ENCODE measurements at regions of chr5 and their contacts with region 1.

Region 1: GRCh38 chr5:157540707-157541446 is 34.7 kb downstream of the ADAM19 start:
- DNase-seq: peak; percentile 77
- ATAC-seq: peak; percentile 93
- H3K4me3 ChIP-seq: peak overlapping the region in 3 of 5 experiments; percentile 2 to 45 (median 42)
- H3K4me3 Mint-ChIP-seq: peak overlapping the region; percentile 70
- H3K27ac ChIP-seq: peak overlapping the region; percentile 69 to 80
- H3K27ac Mint-ChIP-seq: peak overlapping the region; percentile 84
- H3K4me1 ChIP-seq: peaks cover 69 to 72% of the 10 kb centered on the region in 2 donors
- H3K4me1 Mint-ChIP-seq: peaks cover 82% of the 10 kb centered on the region
- H3K27me3 ChIP-seq: no peaks in the 10 kb centered on the region
- H3K27me3 Mint-ChIP-seq: no peaks in the 10 kb centered on the region
- CTCF ChIP-seq: no peak

Region 2: DNA sequence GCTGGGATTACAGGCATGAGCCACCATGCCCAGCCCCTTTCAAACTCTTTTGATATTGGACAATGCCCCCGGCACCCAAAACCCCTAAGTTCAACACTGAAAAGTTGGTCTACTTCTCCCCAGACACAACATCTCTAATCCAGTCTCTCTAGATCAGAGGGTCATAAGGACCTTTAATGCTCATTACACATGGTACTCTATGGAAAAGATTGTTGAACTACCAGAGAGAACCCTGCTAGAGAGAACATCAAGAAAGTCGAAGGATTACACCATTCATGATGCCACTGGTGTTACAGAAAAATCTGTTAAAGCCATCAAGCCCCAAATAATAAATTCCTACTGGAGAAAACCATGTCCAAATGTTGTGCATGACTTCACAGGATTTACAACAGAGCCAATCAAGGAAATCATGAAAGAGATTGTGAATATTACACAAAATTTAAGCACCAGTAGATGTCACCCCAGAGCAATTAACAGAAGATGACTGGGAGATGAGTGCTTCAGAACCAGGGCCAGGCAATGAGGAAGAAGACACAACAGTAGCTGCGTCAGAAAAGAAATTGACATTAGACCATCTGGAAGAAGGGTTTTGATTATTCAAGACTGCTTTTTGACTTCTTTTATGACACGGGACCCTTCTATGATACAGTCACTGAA is 109.2 kb before region 1 on chr5:
- CTCF ChIA-PET with region 1: interaction called, 15 read pairs
- POLR2A ChIA-PET with region 1: no interaction called
- intact Hi-C with region 1: loop called (anchors 5 kb)
- DNase-seq: peak; percentile 84
- ATAC-seq: peak; percentile 100
- H3K4me3 ChIP-seq: peak overlapping the region in 1 of 5 experiments; percentile 30
- H3K4me3 Mint-ChIP-seq: peak overlapping the region; percentile 40
- H3K27ac ChIP-seq: peak overlapping the region; percentile 28 to 67
- H3K27ac Mint-ChIP-seq: peak overlapping the region; percentile 88
- H3K4me1 ChIP-seq: peaks cover 8 to 11% of the 10 kb centered on the region in 2 donors
- H3K4me1 Mint-ChIP-seq: peaks cover 18% of the 10 kb centered on the region
- H3K27me3 ChIP-seq: no peaks in the 10 kb centered on the region
- H3K27me3 Mint-ChIP-seq: no peaks in the 10 kb centered on the region
- CTCF ChIP-seq: peak; percentile 76

Region 3: DNA sequence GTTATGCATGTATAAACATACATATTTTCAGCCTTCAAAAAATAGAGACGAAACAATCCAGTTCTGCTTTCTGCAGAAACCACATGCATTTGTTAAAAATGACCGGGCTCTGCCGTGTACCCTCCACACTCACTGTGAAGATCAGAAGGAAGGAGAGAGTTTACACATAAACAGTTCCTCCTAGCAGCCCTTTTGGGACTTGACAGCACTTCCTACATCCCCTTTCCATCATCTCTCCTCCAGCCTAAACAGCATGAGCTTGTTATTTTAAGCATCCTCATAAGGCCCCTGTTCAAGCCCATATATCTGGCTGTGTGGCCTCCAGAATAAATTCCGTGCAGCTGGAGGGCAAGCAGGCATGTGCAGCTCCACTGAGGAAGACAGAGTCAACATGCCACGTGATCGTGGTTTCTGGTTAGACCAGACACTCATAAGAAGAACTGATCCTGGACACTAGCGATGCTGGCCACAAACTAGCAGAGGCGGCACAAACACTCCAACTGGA is 38.7 kb before region 1 on chr5:
- CTCF ChIA-PET with region 1: no interaction called
- POLR2A ChIA-PET with region 1: no interaction called
- intact Hi-C with region 1: loop called (anchors 1 kb)
- DNase-seq: peak; percentile 87
- ATAC-seq: peak; percentile 76
- H3K4me3 ChIP-seq: no peak overlapping the region
- H3K4me3 Mint-ChIP-seq: peak overlapping the region; percentile 16
- H3K27ac ChIP-seq: peak overlapping the region; percentile 83 to 98
- H3K27ac Mint-ChIP-seq: peak overlapping the region; percentile 95
- H3K4me1 ChIP-seq: peaks cover 84 to 91% of the 10 kb centered on the region in 2 donors
- H3K4me1 Mint-ChIP-seq: peaks cover 87% of the 10 kb centered on the region
- H3K27me3 ChIP-seq: no peaks in the 10 kb centered on the region
- H3K27me3 Mint-ChIP-seq: no peaks in the 10 kb centered on the region
- CTCF ChIP-seq: no peak

Region 4: GRCh38 chr5:157567032-157567431 is 26.2 kb after region 1 on chr5:
- CTCF ChIA-PET with region 1: interaction called, 11 read pairs
- POLR2A ChIA-PET with region 1: interaction called, 8 read pairs
- intact Hi-C with region 1: loop called (anchors 1 kb)
- DNase-seq: peak; percentile 50
- ATAC-seq: no peak
- H3K4me3 ChIP-seq: peak overlapping the region in 2 of 5 experiments; percentile 15 to 29
- H3K4me3 Mint-ChIP-seq: peak overlapping the region; percentile 79
- H3K27ac ChIP-seq: peak overlapping the region; percentile 43 to 64
- H3K27ac Mint-ChIP-seq: peak overlapping the region; percentile 85
- H3K4me1 ChIP-seq: peaks cover 84 to 91% of the 10 kb centered on the region in 2 donors
- H3K4me1 Mint-ChIP-seq: peaks cover 83% of the 10 kb centered on the region
- H3K27me3 ChIP-seq: no peaks in the 10 kb centered on the region
- H3K27me3 Mint-ChIP-seq: no peaks in the 10 kb centered on the region
- CTCF ChIP-seq: no peak

Region 5: GRCh38 chr5:157596487-157596886 is 55.6 kb after region 1 on chr5:
- CTCF ChIA-PET with region 1: interaction called, 12 read pairs
- POLR2A ChIA-PET with region 1: interaction called, 3 read pairs
- intact Hi-C with region 1: no loop called
- DNase-seq: peak; percentile 87
- ATAC-seq: peak; percentile 73
- H3K4me3 ChIP-seq: peak overlapping the region in 1 of 5 experiments; percentile 31
- H3K4me3 Mint-ChIP-seq: peak overlapping the region; percentile 45
- H3K27ac ChIP-seq: peak overlapping the region; percentile 92 to 97
- H3K27ac Mint-ChIP-seq: peak overlapping the region; percentile 85
- H3K4me1 ChIP-seq: peaks cover 92 to 95% of the 10 kb centered on the region in 2 donors
- H3K4me1 Mint-ChIP-seq: peaks cover 93% of the 10 kb centered on the region
- H3K27me3 ChIP-seq: no peaks in the 10 kb centered on the region
- H3K27me3 Mint-ChIP-seq: no peaks in the 10 kb centered on the region
- CTCF ChIP-seq: no peak

Region 6: GRCh38 chr5:157718519-157718918 is 177.6 kb after region 1 on chr5:
- CTCF ChIA-PET with region 1: interaction called, 12 read pairs
- POLR2A ChIA-PET with region 1: interaction called, 4 read pairs
- intact Hi-C with region 1: loop called (anchors 1 kb)
- DNase-seq: peak; percentile 74
- ATAC-seq: peak; percentile 95
- H3K4me3 ChIP-seq: no peak overlapping the region
- H3K4me3 Mint-ChIP-seq: peak overlapping the region; percentile 18
- H3K27ac ChIP-seq: peak overlapping the region in 1 of 2 donors; percentile 30
- H3K27ac Mint-ChIP-seq: peak overlapping the region; percentile 42
- H3K4me1 ChIP-seq: peaks cover 19 to 20% of the 10 kb centered on the region in 2 donors
- H3K4me1 Mint-ChIP-seq: peaks cover 15% of the 10 kb centered on the region
- H3K27me3 ChIP-seq: no peaks in the 10 kb centered on the region
- H3K27me3 Mint-ChIP-seq: no peaks in the 10 kb centered on the region
- CTCF ChIP-seq: peak; percentile 80

Region 7: GRCh38 chr5:157734436-157734835 is 193.6 kb after region 1 on chr5:
- CTCF ChIA-PET with region 1: no interaction called
- POLR2A ChIA-PET with region 1: no interaction called
- intact Hi-C with region 1: no loop called
- DNase-seq: no peak
- ATAC-seq: no peak
- H3K4me3 ChIP-seq: no peak overlapping the region
- H3K4me3 Mint-ChIP-seq: no peak overlapping the region
- H3K27ac ChIP-seq: no peak overlapping the region
- H3K27ac Mint-ChIP-seq: no peak overlapping the region
- H3K4me1 ChIP-seq: peaks cover 17 to 23% of the 10 kb centered on the region in 2 donors
- H3K4me1 Mint-ChIP-seq: peaks cover 26% of the 10 kb centered on the region
- H3K27me3 ChIP-seq: no peaks in the 10 kb centered on the region
- H3K27me3 Mint-ChIP-seq: no peaks in the 10 kb centered on the region
- CTCF ChIP-seq: no peak

Region 8: GRCh38 chr5:158711927-158712529 is 1171.2 kb after region 1 on chr5:
- CTCF ChIA-PET with region 1: no interaction called
- POLR2A ChIA-PET with region 1: no interaction called
- intact Hi-C with region 1: no loop called
- DNase-seq: no peak
- ATAC-seq: no peak
- H3K4me3 ChIP-seq: no peak overlapping the region
- H3K4me3 Mint-ChIP-seq: no peak overlapping the region
- H3K27ac ChIP-seq: no peak overlapping the region
- H3K27ac Mint-ChIP-seq: no peak overlapping the region
- H3K4me1 ChIP-seq: peaks cover 5% of the 10 kb centered on the region in 2 donors
- H3K4me1 Mint-ChIP-seq: peaks cover 19% of the 10 kb centered on the region
- H3K27me3 ChIP-seq: no peaks in the 10 kb centered on the region
- H3K27me3 Mint-ChIP-seq: no peaks in the 10 kb centered on the region
- CTCF ChIP-seq: no peak

Measured in B cell (primary cell).